Heart right ventricle (tissue), 16 donors: ENCODE measurements at regions of chr14 and their contacts with region 1.

Region 1: GRCh38 chr14:77554207-77554606 is 55.6 kb upstream of the ISM2 start:
- DNase-seq: no peak
- ATAC-seq: peak in 2 of 8 donors; percentile 44 to 46
- H3K4me3 ChIP-seq: peak overlapping the region in 1 of 10 donors; percentile 0
- H3K27ac ChIP-seq: peak overlapping the region in 7 of 10 donors; percentile 7 to 68 (median 48)
- H3K4me1 ChIP-seq: peaks cover 0 to 41% (median 11%) of the 10 kb centered on the region in 9 donors
- H3K27me3 ChIP-seq: no peaks in the 10 kb centered on the region
- CTCF ChIP-seq: no peak

Region 2: GRCh38 chr14:77290741-77291140 is 263.5 kb before region 1 on chr14:
- intact Hi-C with region 1: loop called in 1 of 10 experiments (anchors 10 kb)
- DNase-seq: no peak
- ATAC-seq: no peak
- H3K4me3 ChIP-seq: no peak overlapping the region
- H3K27ac ChIP-seq: no peak overlapping the region
- H3K4me1 ChIP-seq: no peaks in the 10 kb centered on the region
- H3K27me3 ChIP-seq: no peaks in the 10 kb centered on the region
- CTCF ChIP-seq: no peak

Region 3: GRCh38 chr14:77301103-77301502 is 253.1 kb before region 1 on chr14:
- intact Hi-C with region 1: loop called in 5 of 10 experiments (anchors 5 to 10 kb)
- DNase-seq: peak; percentile 56 to 69
- ATAC-seq: peak; percentile 28 to 78 (median 65)
- H3K4me3 ChIP-seq: no peak overlapping the region
- H3K27ac ChIP-seq: no peak overlapping the region
- H3K4me1 ChIP-seq: peaks cover 0 to 30% (median 0%) of the 10 kb centered on the region in 9 donors
- H3K27me3 ChIP-seq: no peaks in the 10 kb centered on the region
- CTCF ChIP-seq: peak; percentile 29 to 75 (median 60)

Region 4: DNA sequence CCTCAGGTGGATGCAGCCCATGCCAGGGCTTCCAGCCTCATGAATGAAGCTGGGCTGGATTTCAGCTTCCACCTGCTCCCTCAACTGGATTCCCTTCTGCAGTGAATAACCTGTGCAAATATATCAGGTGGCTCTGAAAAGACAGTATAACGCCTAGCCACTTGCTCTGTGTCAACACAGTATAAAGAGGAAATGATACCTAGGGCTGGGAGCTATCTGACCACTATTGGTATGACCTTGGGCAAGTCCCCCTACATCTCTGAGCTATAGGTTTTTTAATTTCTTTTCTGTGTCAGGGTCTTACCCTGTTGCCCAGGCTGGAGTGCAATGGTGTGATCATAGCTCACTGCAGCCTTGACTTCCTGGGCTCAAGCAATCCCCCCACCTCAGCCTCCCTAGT is 75.4 kb before region 1 on chr14:
- intact Hi-C with region 1: loop called in 1 of 10 experiments (anchors 10 kb)
- DNase-seq: no peak
- ATAC-seq: no peak
- H3K4me3 ChIP-seq: no peak overlapping the region
- H3K27ac ChIP-seq: no peak overlapping the region
- H3K4me1 ChIP-seq: no peaks in the 10 kb centered on the region
- H3K27me3 ChIP-seq: peaks cover 0 to 13% (median 0%) of the 10 kb centered on the region in 7 donors
- CTCF ChIP-seq: no peak

Region 5: DNA sequence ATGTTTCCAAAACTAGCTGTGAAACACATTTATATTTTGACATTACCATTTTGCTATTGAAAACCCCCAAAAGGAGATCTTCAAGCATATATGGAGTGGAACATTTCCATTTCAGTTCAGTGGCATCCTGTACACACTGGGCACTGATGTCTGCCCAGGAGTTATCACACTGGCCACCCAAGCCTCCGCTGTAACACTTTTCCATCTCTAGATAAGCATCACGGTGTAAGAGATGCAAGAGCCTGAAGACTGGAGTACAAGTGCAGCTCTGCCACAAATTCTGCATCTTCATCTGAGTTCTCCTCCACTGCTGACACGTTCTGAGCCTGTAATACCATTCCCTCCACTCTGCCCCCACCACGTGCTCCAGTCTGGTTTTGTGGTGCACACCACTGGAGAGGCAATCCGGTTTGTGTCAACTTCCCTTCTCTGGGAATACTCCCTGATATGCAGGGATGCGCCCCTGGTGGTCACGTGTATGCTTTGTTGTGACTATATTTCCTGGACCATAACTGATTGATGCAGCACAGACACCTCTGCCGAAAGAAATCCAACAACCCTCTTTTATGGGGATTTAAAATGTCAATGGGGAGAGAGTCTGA is 49.5 kb after region 1 on chr14:
- intact Hi-C with region 1: loop called in 1 of 10 experiments (anchors 10 kb)
- DNase-seq: no peak
- ATAC-seq: peak in 6 of 8 donors; percentile 38 to 75 (median 54)
- H3K4me3 ChIP-seq: no peak overlapping the region
- H3K27ac ChIP-seq: no peak overlapping the region
- H3K4me1 ChIP-seq: peaks cover 4 to 75% (median 51%) of the 10 kb centered on the region in 9 donors
- H3K27me3 ChIP-seq: no peaks in the 10 kb centered on the region
- CTCF ChIP-seq: peak in 5 of 9 donors; percentile 5 to 31 (median 18)

Region 6: GRCh38 chr14:77616454-77617229 is 62.4 kb after region 1 on chr14 and contains the start of gene SPTLC2:
- intact Hi-C with region 1: no loop called
- DNase-seq: peak; percentile 97 to 99
- ATAC-seq: peak; percentile 98 to 99 (median 99)
- H3K4me3 ChIP-seq: peak within 1 kb of the TSS; percentile 75 to 98 (median 86)
- H3K27ac ChIP-seq: peak within 1 kb of the TSS; percentile 76 to 94 (median 87)
- H3K4me1 ChIP-seq: peaks cover 3 to 48% (median 17%) of the 10 kb centered on the region in 9 donors
- H3K27me3 ChIP-seq: no peaks in the 10 kb centered on the region
- CTCF ChIP-seq: peak in 3 of 9 donors; percentile 28 to 45 (median 39)
- total RNA-seq, gene SPTLC2: 8.3 to 23.5 (median 13.3) TPM

Region 7: GRCh38 chr14:77654001-77654441 is 99.8 kb after region 1 on chr14:
- intact Hi-C with region 1: no loop called
- DNase-seq: no peak
- ATAC-seq: no peak
- H3K4me3 ChIP-seq: no peak overlapping the region
- H3K27ac ChIP-seq: peak overlapping the region in 1 of 10 donors; percentile 1
- H3K4me1 ChIP-seq: peaks cover 0 to 27% (median 3%) of the 10 kb centered on the region in 9 donors
- H3K27me3 ChIP-seq: no peaks in the 10 kb centered on the region
- CTCF ChIP-seq: no peak